Mucosa of descending colon (tissue), 3 donors: ENCODE measurements at regions of chr12 and their contacts with region 1.

Region 1: GRCh38 chr12:108562348-108563135 is at the start of gene ISCU:
- DNase-seq: peak; percentile 96 to 100 (median 99)
- ATAC-seq: peak; percentile 88
- H3K4me3 ChIP-seq: peak within 1 kb of the TSS; percentile 88
- H3K4me1 ChIP-seq: peaks cover 51% of the 10 kb centered on the region
- CTCF ChIP-seq: peak; percentile 11
- total RNA-seq, gene ISCU: 94.7 to 155 (median 107) TPM

Region 2: DNA sequence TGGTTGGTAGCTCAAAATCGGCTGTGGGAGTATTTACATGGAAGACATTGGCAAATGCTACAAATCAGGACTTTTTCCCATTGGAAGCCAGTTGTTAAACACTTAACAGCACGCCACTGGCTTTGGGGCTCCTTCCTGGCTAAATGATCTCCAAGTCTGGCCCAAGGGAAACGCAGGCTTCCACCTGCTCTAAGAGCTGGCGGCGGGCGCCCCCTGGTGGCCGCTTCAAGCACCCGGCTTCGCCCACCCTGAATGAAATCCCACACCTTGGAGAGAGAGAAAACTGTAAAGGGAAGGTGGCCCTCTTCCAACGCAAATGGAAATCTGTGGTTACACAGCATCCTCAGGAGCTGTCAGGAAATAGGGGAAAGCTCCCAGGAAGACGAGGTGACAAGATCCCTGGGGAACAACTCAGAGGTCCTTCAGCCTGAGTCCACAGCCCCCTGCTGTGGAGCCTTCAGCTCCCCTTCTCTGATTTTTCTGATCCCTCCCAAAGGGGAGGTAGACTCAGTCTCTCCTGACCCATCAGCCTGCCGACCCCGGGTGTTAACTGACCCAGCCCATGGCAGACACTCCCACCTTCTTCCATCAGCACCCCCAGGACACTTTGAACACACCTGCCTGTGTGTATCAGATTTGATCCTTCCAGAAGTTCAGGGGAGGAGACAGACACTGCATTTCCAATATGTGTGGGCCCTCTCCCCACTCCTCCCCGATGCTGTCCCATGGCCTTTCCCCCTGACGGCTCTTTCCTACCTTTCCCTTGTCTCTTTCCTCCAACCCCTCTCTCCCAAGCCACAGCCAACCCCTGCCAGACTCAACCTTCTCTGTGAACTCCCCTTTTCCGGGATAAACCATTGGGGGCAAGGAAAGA is 55.8 kb after region 1 on chr12:
- intact Hi-C with region 1: loop called (anchors 5 kb)
- DNase-seq: peak; percentile 82 to 86 (median 82)
- ATAC-seq: peak; percentile 87
- H3K4me3 ChIP-seq: no peak overlapping the region
- H3K4me1 ChIP-seq: peaks cover 6% of the 10 kb centered on the region
- CTCF ChIP-seq: peak; percentile 80

Region 3: DNA sequence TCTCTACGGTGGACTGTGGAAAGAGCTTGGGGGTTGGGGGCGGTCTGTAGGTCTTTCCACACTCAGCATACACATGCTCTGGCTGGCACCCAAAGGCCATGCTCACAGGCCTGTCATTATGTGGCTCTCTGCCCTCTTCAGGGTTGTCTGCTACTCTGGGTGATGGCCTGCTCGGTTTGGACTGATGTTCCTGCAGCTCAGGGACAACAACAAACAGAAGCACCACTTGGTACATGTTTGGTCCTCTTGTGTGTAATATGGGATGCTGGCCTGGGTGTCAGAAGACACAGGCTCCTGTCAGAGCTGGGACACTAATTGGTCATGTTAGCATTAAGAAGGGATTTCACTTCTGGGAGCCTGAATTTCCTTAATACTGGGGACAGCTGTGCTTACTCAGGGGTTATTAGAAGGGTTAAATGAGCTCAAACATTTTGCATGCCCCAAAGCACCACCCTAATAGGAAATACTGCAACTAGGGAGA is 103.9 kb after region 1 on chr12:
- intact Hi-C with region 1: no loop called
- DNase-seq: peak in 1 of 3 donors; percentile 46
- ATAC-seq: no peak
- H3K4me3 ChIP-seq: no peak overlapping the region
- H3K4me1 ChIP-seq: peaks cover 3% of the 10 kb centered on the region
- CTCF ChIP-seq: no peak

Region 4: DNA sequence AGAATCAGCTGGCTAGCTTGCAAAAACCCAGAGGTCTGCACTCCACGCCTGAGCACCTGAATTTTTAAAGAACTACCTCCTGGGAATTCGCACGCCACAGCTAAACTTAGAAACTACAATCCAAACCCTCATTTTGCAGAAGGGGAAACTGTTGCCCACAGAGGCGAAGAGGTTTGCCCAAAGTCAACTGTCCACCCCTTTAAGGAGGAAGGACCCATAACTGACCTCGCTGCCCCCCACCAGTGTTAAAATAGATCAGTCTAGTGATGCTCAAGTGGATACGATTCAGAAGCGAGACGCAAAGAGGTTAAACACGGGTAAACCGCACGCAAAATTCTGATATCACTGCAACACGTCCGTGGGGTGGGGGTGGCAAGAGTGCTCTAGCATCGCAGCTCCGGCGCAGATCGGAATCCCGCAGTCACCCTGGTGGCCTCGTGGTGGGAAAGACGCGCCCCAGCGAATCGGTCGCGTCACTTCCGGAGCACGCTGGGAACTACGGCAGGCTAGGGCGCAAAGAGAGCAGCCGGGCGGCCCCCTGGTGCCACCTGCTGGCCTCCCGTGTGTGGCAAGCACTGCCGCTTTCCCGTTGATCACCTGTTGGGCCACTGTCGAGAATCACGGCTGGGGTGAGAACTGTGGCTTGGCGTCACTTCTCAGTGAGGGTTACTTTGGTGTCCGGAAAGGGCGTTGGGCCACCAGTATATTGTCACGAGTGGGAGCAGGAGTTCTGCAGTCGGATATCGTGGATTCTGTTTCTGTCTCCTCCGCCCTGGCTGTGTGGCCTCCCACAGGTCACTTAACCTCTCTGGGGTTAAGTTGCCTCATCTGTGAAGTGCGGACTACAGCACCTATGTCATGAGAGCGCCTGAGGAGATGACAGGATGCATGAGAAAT is 530.7 kb after region 1 on chr12 and contains the start of gene ALKBH2:
- intact Hi-C with region 1: loop called in 1 of 2 experiments (anchors 10 kb)
- DNase-seq: peak; percentile 95 to 96 (median 95)
- ATAC-seq: peak; percentile 88
- H3K4me3 ChIP-seq: no peak within 1 kb of the TSS
- H3K4me1 ChIP-seq: peaks cover 15% of the 10 kb centered on the region
- CTCF ChIP-seq: peak; percentile 98
- total RNA-seq, gene ALKBH2: 5.8 to 10.1 (median 7.5) TPM

Region 5: GRCh38 chr12:109362471-109362870 is 799.9 kb after region 1 on chr12:
- intact Hi-C with region 1: no loop called
- DNase-seq: no peak
- ATAC-seq: no peak
- H3K4me3 ChIP-seq: no peak overlapping the region
- H3K4me1 ChIP-seq: no peaks in the 10 kb centered on the region
- CTCF ChIP-seq: no peak